ENCODE measurements at regions of chr6 and their contacts with region 1.

Region 1: DNA sequence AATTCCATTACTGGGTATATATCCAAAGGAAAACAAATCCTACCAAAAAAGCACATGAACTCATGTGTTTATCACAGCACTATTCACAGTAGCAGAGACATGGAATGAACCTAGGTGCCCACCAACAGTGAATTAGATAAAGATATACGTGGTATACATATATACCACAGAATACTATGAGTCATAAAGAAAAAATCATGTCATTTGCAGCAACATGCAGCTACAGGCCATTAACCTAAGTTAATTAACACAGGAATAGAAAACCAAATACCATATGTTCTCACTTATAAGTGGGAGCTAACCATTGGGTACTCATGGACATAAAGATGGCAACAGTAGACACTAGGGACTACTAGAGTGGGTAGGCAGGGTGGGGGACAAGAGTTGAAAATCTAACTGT is 4.2 kb downstream of the OR2B2 start:
- DNase-seq: no peak
- ATAC-seq: no peak
- H3K4me3 ChIP-seq: no peak overlapping the region
- H3K4me3 Mint-ChIP-seq: no peak overlapping the region
- H3K27ac ChIP-seq: no peak overlapping the region
- H3K27ac Mint-ChIP-seq: no peak overlapping the region
- H3K4me1 ChIP-seq: peaks cover 0 to 5% of the 10 kb centered on the region in 2 donors
- H3K4me1 Mint-ChIP-seq: peaks cover 3% of the 10 kb centered on the region
- H3K27me3 ChIP-seq: no peaks in the 10 kb centered on the region
- H3K27me3 Mint-ChIP-seq: peaks cover 11% of the 10 kb centered on the region
- CTCF ChIP-seq: no peak

Region 2: GRCh38 chr6:27460701-27461100 is 447.3 kb before region 1 on chr6:
- CTCF ChIA-PET with region 1: no interaction called
- POLR2A ChIA-PET with region 1: no interaction called
- intact Hi-C with region 1: loop called (anchors 5 kb)
- DNase-seq: no peak
- ATAC-seq: no peak
- H3K4me3 ChIP-seq: no peak overlapping the region
- H3K4me3 Mint-ChIP-seq: no peak overlapping the region
- H3K27ac ChIP-seq: no peak overlapping the region
- H3K27ac Mint-ChIP-seq: no peak overlapping the region
- H3K4me1 ChIP-seq: no peaks in the 10 kb centered on the region
- H3K4me1 Mint-ChIP-seq: peaks cover 3% of the 10 kb centered on the region
- H3K27me3 ChIP-seq: no peaks in the 10 kb centered on the region
- H3K27me3 Mint-ChIP-seq: no peaks in the 10 kb centered on the region
- CTCF ChIP-seq: no peak

Region 3: GRCh38 chr6:27847706-27848105 is 60.3 kb before region 1 on chr6:
- CTCF ChIA-PET with region 1: no interaction called
- POLR2A ChIA-PET with region 1: no interaction called
- intact Hi-C with region 1: no loop called
- DNase-seq: no peak
- ATAC-seq: no peak
- H3K4me3 ChIP-seq: no peak overlapping the region
- H3K4me3 Mint-ChIP-seq: no peak overlapping the region
- H3K27ac ChIP-seq: no peak overlapping the region
- H3K27ac Mint-ChIP-seq: no peak overlapping the region
- H3K4me1 ChIP-seq: no peaks in the 10 kb centered on the region
- H3K4me1 Mint-ChIP-seq: no peaks in the 10 kb centered on the region
- H3K27me3 ChIP-seq: no peaks in the 10 kb centered on the region
- H3K27me3 Mint-ChIP-seq: no peaks in the 10 kb centered on the region
- CTCF ChIP-seq: no peak

Region 4: GRCh38 chr6:28824793-28825731 is 917.0 kb after region 1 on chr6:
- CTCF ChIA-PET with region 1: no interaction called
- POLR2A ChIA-PET with region 1: no interaction called
- intact Hi-C with region 1: no loop called
- DNase-seq: peak; percentile 36
- ATAC-seq: no peak
- H3K4me3 ChIP-seq: no peak overlapping the region
- H3K4me3 Mint-ChIP-seq: peak overlapping the region; percentile 46
- H3K27ac ChIP-seq: no peak overlapping the region
- H3K27ac Mint-ChIP-seq: no peak overlapping the region
- H3K4me1 ChIP-seq: peaks cover 0 to 10% of the 10 kb centered on the region in 2 donors
- H3K4me1 Mint-ChIP-seq: peaks cover 10% of the 10 kb centered on the region
- H3K27me3 ChIP-seq: peaks cover 0 to 56% (median 54%) of the 10 kb centered on the region in 4 experiments
- H3K27me3 Mint-ChIP-seq: peaks cover 66% of the 10 kb centered on the region
- CTCF ChIP-seq: no peak

Measured in B cell (primary cell).